Aorta (tissue), 5 donors: ENCODE measurements at regions of chr21 and their contacts with region 1.

Region 1: GRCh38 chr21:34510148-34511142 is 1.6 kb downstream of the KCNE1 start:
- DNase-seq: peak; percentile 91 to 94
- ATAC-seq: peak; percentile 83
- H3K4me3 ChIP-seq: no peak overlapping the region
- H3K27ac ChIP-seq: no peak overlapping the region
- H3K4me1 ChIP-seq: no peaks in the 10 kb centered on the region
- H3K27me3 ChIP-seq: no peaks in the 10 kb centered on the region

Region 2: GRCh38 chr21:34313116-34313515 is 197.3 kb before region 1 on chr21:
- intact Hi-C with region 1: no loop called
- DNase-seq: no peak
- ATAC-seq: no peak
- H3K4me3 ChIP-seq: no peak overlapping the region
- H3K27ac ChIP-seq: no peak overlapping the region
- H3K4me1 ChIP-seq: peaks cover 1 to 2% of the 10 kb centered on the region in 2 donors
- H3K27me3 ChIP-seq: no peaks in the 10 kb centered on the region

Region 3: GRCh38 chr21:34603002-34603709 is 92.7 kb after region 1 on chr21:
- intact Hi-C with region 1: loop called in 1 of 2 experiments (anchors 1 kb)
- DNase-seq: peak; percentile 90 to 94
- ATAC-seq: peak; percentile 93
- H3K4me3 ChIP-seq: no peak overlapping the region
- H3K27ac ChIP-seq: no peak overlapping the region
- H3K4me1 ChIP-seq: no peaks in the 10 kb centered on the region
- H3K27me3 ChIP-seq: no peaks in the 10 kb centered on the region